PC-3 (cell line): ENCODE measurements at regions of chrX and their contacts with region 1.

Region 1: GRCh38 chrX:13487731-13488523 is 81.5 kb upstream of the EGFL6 start:
- DNase-seq: peak; percentile 94
- ATAC-seq: peak; percentile 71
- H3K4me3 ChIP-seq: no peak overlapping the region
- H3K27ac ChIP-seq: peak overlapping the region; percentile 99
- H3K4me1 ChIP-seq: peaks cover 41% of the 10 kb centered on the region
- H3K27me3 ChIP-seq: no peaks in the 10 kb centered on the region
- CTCF ChIP-seq: peak; percentile 68

Region 2: GRCh38 chrX:12901486-12901885 is 586.4 kb before region 1 on chrX:
- CTCF ChIA-PET with region 1: no interaction called
- POLR2A ChIA-PET with region 1: no interaction called
- intact Hi-C with region 1: loop called (anchors 5 kb)
- DNase-seq: peak; percentile 79
- ATAC-seq: peak; percentile 68
- H3K4me3 ChIP-seq: no peak overlapping the region
- H3K27ac ChIP-seq: no peak overlapping the region
- H3K4me1 ChIP-seq: no peaks in the 10 kb centered on the region
- H3K27me3 ChIP-seq: no peaks in the 10 kb centered on the region
- CTCF ChIP-seq: peak; percentile 60

Region 3: DNA sequence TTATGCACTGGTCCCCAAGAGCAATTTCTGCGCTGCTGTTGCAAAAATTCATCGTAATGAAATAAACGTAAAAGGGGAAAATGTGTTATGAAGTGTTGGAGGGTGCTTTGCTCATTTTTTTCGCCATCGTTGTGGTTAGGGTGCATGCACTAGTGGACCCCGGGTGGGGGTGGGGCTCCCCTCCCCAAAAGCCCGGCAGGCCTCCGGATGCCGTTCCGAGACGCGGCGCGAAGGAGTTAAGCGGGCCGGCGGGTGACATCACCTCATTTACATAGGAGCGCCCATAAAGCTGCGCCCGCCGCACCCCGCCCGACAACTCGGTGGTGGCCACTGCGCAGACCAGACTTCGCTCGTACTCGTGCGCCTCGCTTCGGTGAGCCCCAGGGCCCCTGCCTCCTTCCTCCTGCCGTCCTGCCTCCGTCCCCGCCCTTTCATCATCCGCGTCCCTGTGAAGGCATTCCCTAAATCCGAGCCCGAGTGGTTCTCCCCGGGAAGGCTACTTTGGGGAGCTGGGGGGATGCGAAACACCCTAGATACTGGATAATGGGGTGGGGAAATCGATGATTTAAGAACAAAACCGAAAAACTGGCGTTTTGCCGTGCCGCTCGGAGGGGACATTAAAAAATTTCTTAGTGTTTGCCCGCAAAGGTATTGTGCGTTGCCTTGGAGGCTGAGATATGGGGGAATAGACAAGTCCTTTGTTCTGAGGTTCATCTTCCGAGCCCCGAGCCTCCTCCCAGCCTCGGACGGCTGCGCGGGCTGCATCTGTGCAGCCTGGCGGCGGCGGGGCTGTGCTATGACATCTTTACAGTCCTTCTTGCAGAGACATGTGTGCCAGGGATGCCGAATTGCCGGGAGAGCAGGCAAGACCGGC is 512.9 kb before region 1 on chrX and contains the start of gene TMSB4X:
- CTCF ChIA-PET with region 1: interaction called, 4 read pairs
- POLR2A ChIA-PET with region 1: no interaction called
- intact Hi-C with region 1: loop called (anchors 1 kb)
- DNase-seq: peak; percentile 81
- ATAC-seq: peak; percentile 74
- H3K4me3 ChIP-seq: peak within 1 kb of the TSS; percentile 92
- H3K27ac ChIP-seq: peak within 1 kb of the TSS; percentile 85
- H3K4me1 ChIP-seq: peaks cover 24% of the 10 kb centered on the region
- H3K27me3 ChIP-seq: no peaks in the 10 kb centered on the region
- CTCF ChIP-seq: no peak
- total RNA-seq, gene TMSB4X: 1,640 and 2,159 TPM in 2 replicates

Region 4: DNA sequence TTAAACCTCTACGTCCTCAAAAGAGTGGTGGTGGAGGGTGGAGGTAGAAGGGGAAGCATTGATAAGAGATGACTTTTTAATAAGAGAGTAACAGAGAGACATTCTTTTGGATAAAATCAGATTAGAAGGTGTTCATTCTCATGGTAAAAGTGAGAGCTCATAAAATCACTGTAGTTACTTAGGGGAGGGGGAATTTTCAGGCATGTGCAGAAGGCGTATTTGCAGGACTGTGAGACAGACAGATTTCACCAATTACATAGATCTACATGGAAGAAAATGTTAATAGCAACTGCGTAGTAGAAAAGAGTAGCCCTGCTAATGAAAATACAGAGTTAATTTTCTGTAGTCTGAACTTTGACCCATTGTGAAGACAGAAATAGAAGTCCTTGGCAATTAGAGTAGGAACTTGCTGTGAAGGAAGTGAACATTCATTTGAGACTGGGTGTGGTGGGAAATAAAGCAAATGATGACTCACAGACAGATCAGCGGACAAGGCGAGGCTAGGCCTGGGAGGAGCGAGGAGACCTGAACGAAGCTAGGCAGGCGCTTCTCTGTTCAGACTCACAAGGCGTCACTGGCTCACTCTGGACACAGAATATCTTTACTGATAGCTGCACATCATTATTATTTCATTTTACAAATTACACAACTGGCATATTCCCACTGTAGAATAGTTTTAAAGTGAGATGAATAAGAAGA is 386.3 kb before region 1 on chrX:
- CTCF ChIA-PET with region 1: no interaction called
- POLR2A ChIA-PET with region 1: no interaction called
- intact Hi-C with region 1: loop called (anchors 5 kb)
- DNase-seq: peak; percentile 91
- ATAC-seq: peak; percentile 98
- H3K4me3 ChIP-seq: 0 out of 2 replicates have a peak overlapping the region, but pooled peaks have one; percentile 4
- H3K27ac ChIP-seq: peak overlapping the region; percentile 94
- H3K4me1 ChIP-seq: peaks cover 44% of the 10 kb centered on the region
- H3K27me3 ChIP-seq: no peaks in the 10 kb centered on the region
- CTCF ChIP-seq: no peak

Region 5: DNA sequence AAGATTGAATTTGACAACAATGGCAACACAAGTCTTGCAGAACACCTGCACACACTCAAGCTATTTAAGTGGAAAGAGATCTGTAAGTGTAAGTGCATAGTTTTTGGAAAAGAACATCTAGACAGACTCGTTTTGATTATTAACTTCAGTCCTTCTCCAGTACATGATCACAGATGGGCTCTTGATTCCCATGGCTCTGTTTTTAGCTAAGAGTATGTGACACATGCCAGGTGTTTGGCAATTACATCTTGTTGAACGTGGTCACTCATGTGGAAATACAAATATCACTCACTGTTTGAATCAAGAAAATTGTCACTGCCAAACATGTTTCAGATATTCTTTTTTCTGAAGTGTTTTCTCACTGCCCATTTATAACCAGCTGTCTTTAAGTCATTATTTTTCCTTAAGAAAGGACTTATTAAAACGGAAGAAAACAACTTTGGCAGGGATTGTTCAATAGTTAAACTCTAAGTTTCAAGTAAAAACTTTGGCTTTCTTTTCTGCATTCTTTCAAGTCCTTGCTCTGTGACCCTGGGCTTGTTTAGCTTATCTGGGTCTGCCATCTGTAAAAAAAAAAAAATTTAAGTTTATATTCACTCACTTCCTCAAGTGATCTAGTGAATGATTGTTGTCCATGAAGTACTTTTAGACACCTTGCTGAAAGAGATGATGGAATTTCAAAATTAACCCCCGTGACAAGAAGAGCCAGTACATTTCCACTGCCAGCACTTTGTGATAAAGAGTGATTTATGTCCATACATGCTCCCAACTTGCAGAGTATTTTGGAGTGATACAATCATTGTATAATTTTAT is 293.4 kb before region 1 on chrX:
- CTCF ChIA-PET with region 1: no interaction called
- POLR2A ChIA-PET with region 1: no interaction called
- intact Hi-C with region 1: loop called (anchors 5 kb)
- DNase-seq: peak; percentile 70
- ATAC-seq: peak; percentile 61
- H3K4me3 ChIP-seq: no peak overlapping the region
- H3K27ac ChIP-seq: peak overlapping the region; percentile 86
- H3K4me1 ChIP-seq: peaks cover 48% of the 10 kb centered on the region
- H3K27me3 ChIP-seq: no peaks in the 10 kb centered on the region
- CTCF ChIP-seq: no peak

Region 6: GRCh38 chrX:13398073-13398823 is 89.7 kb before region 1 on chrX:
- CTCF ChIA-PET with region 1: no interaction called
- POLR2A ChIA-PET with region 1: no interaction called
- intact Hi-C with region 1: loop called (anchors 1 kb)
- DNase-seq: peak; percentile 97
- ATAC-seq: peak; percentile 93
- H3K4me3 ChIP-seq: no peak overlapping the region
- H3K27ac ChIP-seq: peak overlapping the region; percentile 95
- H3K4me1 ChIP-seq: peaks cover 30% of the 10 kb centered on the region
- H3K27me3 ChIP-seq: no peaks in the 10 kb centered on the region
- CTCF ChIP-seq: no peak

Region 7: GRCh38 chrX:13646154-13646549 is 158.2 kb after region 1 on chrX:
- CTCF ChIA-PET with region 1: no interaction called
- POLR2A ChIA-PET with region 1: no interaction called
- intact Hi-C with region 1: no loop called
- DNase-seq: peak; percentile 66
- ATAC-seq: peak; percentile 85
- H3K4me3 ChIP-seq: no peak overlapping the region
- H3K27ac ChIP-seq: no peak overlapping the region
- H3K4me1 ChIP-seq: peaks cover 6% of the 10 kb centered on the region; the same call in 1 of the 2 replicates
- H3K27me3 ChIP-seq: no peaks in the 10 kb centered on the region
- CTCF ChIP-seq: peak; percentile 85

Region 8: DNA sequence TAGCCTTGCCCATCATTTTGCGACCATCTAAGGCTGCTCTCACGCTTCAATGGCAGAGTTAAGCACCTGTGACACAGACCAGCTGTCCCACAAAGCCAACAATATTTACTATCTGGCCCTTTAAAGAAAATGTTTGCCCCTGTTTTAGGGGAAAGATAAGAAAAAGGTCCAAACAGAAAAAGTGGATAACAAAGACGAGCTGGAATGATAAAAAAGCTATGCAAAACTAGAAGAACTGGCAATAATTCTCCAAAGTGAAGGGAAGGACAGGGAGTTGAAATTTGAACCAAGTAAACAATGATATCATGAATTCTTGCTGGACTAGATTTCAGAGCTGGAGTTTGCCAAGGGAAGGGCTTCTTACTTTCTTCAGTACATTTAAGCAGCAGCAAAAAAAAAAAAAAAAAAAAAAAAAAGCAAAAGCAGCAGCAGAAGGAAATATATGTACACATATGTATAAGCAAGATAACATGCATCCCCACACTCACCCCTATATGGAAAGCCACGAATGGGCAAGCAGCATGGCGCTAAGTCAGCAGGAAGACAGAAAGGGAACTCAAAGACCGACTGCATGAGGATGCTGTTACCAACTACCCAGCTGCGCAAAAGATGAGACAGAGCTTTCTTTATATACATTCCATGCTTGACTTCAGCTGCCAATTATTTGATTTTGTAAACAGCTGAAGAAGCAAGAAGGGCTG is 234.0 kb after region 1 on chrX:
- CTCF ChIA-PET with region 1: no interaction called
- POLR2A ChIA-PET with region 1: interaction called, 17 read pairs
- intact Hi-C with region 1: no loop called
- DNase-seq: peak; percentile 64
- ATAC-seq: peak; percentile 72
- H3K4me3 ChIP-seq: peak overlapping the region; percentile 45
- H3K27ac ChIP-seq: peak overlapping the region; percentile 76
- H3K4me1 ChIP-seq: peaks cover 26% of the 10 kb centered on the region
- H3K27me3 ChIP-seq: no peaks in the 10 kb centered on the region
- CTCF ChIP-seq: no peak